ENCODE measurements at regions of chr2 and their contacts with region 1.

Region 1: DNA sequence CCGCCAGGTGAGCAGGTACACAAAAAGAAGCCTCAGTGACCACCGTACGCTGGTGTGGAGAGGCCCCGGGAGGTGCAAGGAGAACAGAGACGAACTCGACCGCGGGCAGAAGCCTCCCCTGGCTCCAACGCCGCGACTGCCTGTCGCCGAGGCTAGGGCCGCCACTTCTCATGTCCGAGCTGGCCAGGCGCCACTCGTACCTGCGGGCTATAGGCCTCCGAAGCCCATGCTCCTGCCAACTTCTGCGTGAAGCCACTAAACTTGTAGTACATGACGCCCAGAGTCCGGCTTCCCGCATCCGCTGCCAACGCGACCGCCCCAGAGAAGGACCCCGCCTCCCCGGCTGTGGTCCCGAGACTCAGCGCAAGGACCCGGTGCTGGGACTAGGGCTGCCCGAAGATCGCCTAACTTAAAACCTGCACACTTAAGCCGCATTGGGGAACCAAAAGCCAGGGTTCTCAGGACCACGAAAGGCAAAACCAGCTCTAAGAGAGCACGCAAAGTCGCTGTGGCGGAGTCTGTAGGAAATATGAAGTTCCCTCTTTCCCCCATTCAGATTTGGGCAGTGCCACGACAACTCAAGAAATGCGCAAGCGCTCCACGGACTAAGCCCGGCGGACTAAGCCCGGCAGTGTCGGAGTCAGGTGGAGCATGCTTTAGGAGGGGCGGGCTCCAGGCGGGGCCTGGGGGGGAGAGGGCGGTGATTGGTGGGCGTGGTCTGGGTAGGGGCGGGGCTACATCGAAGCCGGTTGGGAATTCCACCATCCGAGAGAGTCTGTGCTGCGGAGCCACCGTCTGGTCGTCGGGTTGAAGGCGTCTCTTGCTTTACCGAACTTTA is at the start of gene COX7A2L:
- DNase-seq: peak; percentile 98
- ATAC-seq: peak; percentile 94
- H3K4me3 Mint-ChIP-seq: peak within 1 kb of the TSS; percentile 89
- H3K27ac Mint-ChIP-seq: peak within 1 kb of the TSS; percentile 94
- H3K4me1 Mint-ChIP-seq: peaks cover 40% of the 10 kb centered on the region
- H3K27me3 Mint-ChIP-seq: no peaks in the 10 kb centered on the region
- total RNA-seq, gene COX7A2L: 103 TPM

Region 2: GRCh38 chr2:41840702-41841551 is 520.2 kb before region 1 on chr2:
- CTCF ChIA-PET with region 1: no interaction called
- POLR2A ChIA-PET with region 1: no interaction called
- intact Hi-C with region 1: loop called in 1 of 2 experiments (anchors 1 kb)
- DNase-seq: peak; percentile 99
- ATAC-seq: peak; percentile 100
- H3K4me3 Mint-ChIP-seq: peak overlapping the region; percentile 84
- H3K27ac Mint-ChIP-seq: peak overlapping the region; percentile 92
- H3K4me1 Mint-ChIP-seq: peaks cover 10% of the 10 kb centered on the region
- H3K27me3 Mint-ChIP-seq: peaks cover 16% of the 10 kb centered on the region

Region 3: GRCh38 chr2:42102024-42102590 is 259.0 kb before region 1 on chr2:
- CTCF ChIA-PET with region 1: interaction called, 3 read pairs
- POLR2A ChIA-PET with region 1: interaction called, 3 read pairs
- intact Hi-C with region 1: loop called (anchors 1 kb)
- DNase-seq: peak; percentile 89
- ATAC-seq: peak; percentile 40
- H3K4me3 Mint-ChIP-seq: peak overlapping the region; percentile 69
- H3K27ac Mint-ChIP-seq: peak overlapping the region; percentile 94
- H3K4me1 Mint-ChIP-seq: peaks cover 38% of the 10 kb centered on the region
- H3K27me3 Mint-ChIP-seq: no peaks in the 10 kb centered on the region

Region 4: GRCh38 chr2:42424033-42424432 is 62.9 kb after region 1 on chr2:
- CTCF ChIA-PET with region 1: no interaction called
- POLR2A ChIA-PET with region 1: no interaction called
- intact Hi-C with region 1: loop called in 1 of 2 experiments (anchors 1 kb)
- DNase-seq: no peak
- ATAC-seq: no peak
- H3K4me3 Mint-ChIP-seq: no peak overlapping the region
- H3K27ac Mint-ChIP-seq: no peak overlapping the region
- H3K4me1 Mint-ChIP-seq: peaks cover 21% of the 10 kb centered on the region
- H3K27me3 Mint-ChIP-seq: peaks cover 2% of the 10 kb centered on the region

Region 5: DNA sequence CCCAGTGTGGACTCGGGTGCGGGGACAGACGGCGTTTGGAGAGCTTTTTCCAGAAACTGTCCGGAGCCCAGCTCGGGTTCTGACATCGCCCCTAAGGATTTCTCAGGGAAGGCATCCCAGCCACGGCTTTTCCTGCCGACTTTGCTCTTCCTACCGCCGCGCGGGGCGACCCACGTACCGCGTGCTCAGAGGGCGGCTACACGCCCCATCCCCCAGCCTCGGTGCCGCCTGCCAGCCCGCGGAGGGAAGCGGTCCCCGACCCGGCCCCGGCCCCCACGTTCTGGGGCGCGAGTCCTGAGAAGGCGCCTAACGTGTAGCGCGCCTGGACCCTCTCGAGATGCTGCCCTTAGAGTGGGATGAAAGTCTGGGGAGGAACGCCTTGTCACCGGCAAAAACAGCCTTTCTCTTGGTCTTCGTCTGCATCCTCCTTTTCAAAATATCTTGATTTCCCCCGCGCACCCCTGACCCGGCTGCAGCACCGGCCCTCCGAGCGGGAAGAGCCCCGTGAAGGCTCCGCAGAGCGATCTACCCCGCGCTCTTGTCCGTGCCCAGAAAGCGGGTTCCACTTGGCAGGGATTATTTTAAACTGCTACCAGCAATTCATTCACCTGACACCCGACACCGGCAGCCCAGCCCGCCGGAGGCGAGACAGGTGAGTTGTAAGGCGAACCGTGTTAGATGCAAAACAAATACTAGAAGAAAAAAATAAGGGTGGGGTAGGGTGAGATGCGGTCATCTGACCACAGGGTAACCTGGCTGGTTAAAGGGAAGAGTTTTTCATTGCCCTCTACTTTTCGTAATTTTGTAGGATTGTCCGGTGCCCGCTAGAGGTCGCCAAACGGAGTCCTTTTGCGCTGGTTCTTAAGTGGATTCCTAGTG is 133.5 kb after region 1 on chr2:
- CTCF ChIA-PET with region 1: no interaction called
- POLR2A ChIA-PET with region 1: no interaction called
- intact Hi-C with region 1: loop called (anchors 1 to 2 kb)
- DNase-seq: peak; percentile 89
- ATAC-seq: peak; percentile 59
- H3K4me3 Mint-ChIP-seq: peak overlapping the region; percentile 80
- H3K27ac Mint-ChIP-seq: peak overlapping the region; percentile 81
- H3K4me1 Mint-ChIP-seq: peaks cover 17% of the 10 kb centered on the region
- H3K27me3 Mint-ChIP-seq: peaks cover 8% of the 10 kb centered on the region

Region 6: GRCh38 chr2:42568401-42569115 is 207.4 kb after region 1 on chr2 and contains the start of gene MTA3:
- CTCF ChIA-PET with region 1: no interaction called
- POLR2A ChIA-PET with region 1: no interaction called
- intact Hi-C with region 1: loop called in 1 of 2 experiments (anchors 2 kb)
- DNase-seq: peak; percentile 81
- ATAC-seq: peak; percentile 81
- H3K4me3 Mint-ChIP-seq: peak within 1 kb of the TSS; percentile 86
- H3K27ac Mint-ChIP-seq: peak within 1 kb of the TSS; percentile 91
- H3K4me1 Mint-ChIP-seq: peaks cover 32% of the 10 kb centered on the region
- H3K27me3 Mint-ChIP-seq: no peaks in the 10 kb centered on the region
- total RNA-seq, gene MTA3: 45.0 to 58.6 TPM

Region 7: GRCh38 chr2:43637030-43637803 is 1276.1 kb after region 1 on chr2 and contains the start of gene PLEKHH2:
- CTCF ChIA-PET with region 1: no interaction called
- POLR2A ChIA-PET with region 1: no interaction called
- intact Hi-C with region 1: loop called in 1 of 2 experiments (anchors 5 kb)
- DNase-seq: peak; percentile 94
- ATAC-seq: peak; percentile 100
- H3K4me3 Mint-ChIP-seq: peak within 1 kb of the TSS; percentile 80
- H3K27ac Mint-ChIP-seq: peak within 1 kb of the TSS; percentile 32
- H3K4me1 Mint-ChIP-seq: peaks cover 14% of the 10 kb centered on the region
- H3K27me3 Mint-ChIP-seq: peaks cover 31% of the 10 kb centered on the region
- total RNA-seq, gene PLEKHH2: 1.5 to 2.2 TPM